ENCODE measurements at regions of chr7 and their contacts with region 1.

Region 1: GRCh38 chr7:94289071-94289470 is 105.6 kb upstream of the COL1A2 start:
- DNase-seq: peak; percentile 48 to 57
- H3K4me3 ChIP-seq: no peak overlapping the region
- H3K27ac ChIP-seq: no peak overlapping the region
- H3K4me1 ChIP-seq: no peaks in the 10 kb centered on the region
- H3K27me3 ChIP-seq: no peaks in the 10 kb centered on the region
- CTCF ChIP-seq: peak; percentile 82

Region 2: GRCh38 chr7:93622036-93623033 is 666.7 kb before region 1 on chr7:
- CTCF ChIA-PET with region 1: no interaction called
- POLR2A ChIA-PET with region 1: no interaction called
- intact Hi-C with region 1: loop called (anchors 5 kb)
- DNase-seq: peak in 1 of 2 experiments; percentile 10
- H3K4me3 ChIP-seq: peak overlapping the region; percentile 19; the same call in 1 of the 2 replicates
- H3K27ac ChIP-seq: no peak overlapping the region
- H3K4me1 ChIP-seq: no peaks in the 10 kb centered on the region
- H3K27me3 ChIP-seq: no peaks in the 10 kb centered on the region
- CTCF ChIP-seq: peak; percentile 62; the same call in 1 of the 2 replicates

Region 3: GRCh38 chr7:94395141-94396036 is 106.3 kb after region 1 on chr7:
- CTCF ChIA-PET with region 1: interaction called, 15 read pairs
- POLR2A ChIA-PET with region 1: no interaction called
- intact Hi-C with region 1: loop called (anchors 1 kb)
- DNase-seq: no peak
- H3K4me3 ChIP-seq: no peak overlapping the region
- H3K27ac ChIP-seq: no peak overlapping the region
- H3K4me1 ChIP-seq: 0 out of 2 replicates have a peak, but pooled peaks cover under 1% of the 10 kb centered on the region
- H3K27me3 ChIP-seq: no peaks in the 10 kb centered on the region
- CTCF ChIP-seq: peak; percentile 66

Region 4: GRCh38 chr7:94436018-94436604 is 147.0 kb after region 1 on chr7:
- CTCF ChIA-PET with region 1: interaction called, 10 read pairs
- POLR2A ChIA-PET with region 1: no interaction called
- intact Hi-C with region 1: loop called (anchors 1 kb)
- DNase-seq: peak; percentile 37 to 48
- H3K4me3 ChIP-seq: no peak overlapping the region
- H3K27ac ChIP-seq: no peak overlapping the region
- H3K4me1 ChIP-seq: no peaks in the 10 kb centered on the region
- H3K27me3 ChIP-seq: no peaks in the 10 kb centered on the region
- CTCF ChIP-seq: peak; percentile 88

Region 5: DNA sequence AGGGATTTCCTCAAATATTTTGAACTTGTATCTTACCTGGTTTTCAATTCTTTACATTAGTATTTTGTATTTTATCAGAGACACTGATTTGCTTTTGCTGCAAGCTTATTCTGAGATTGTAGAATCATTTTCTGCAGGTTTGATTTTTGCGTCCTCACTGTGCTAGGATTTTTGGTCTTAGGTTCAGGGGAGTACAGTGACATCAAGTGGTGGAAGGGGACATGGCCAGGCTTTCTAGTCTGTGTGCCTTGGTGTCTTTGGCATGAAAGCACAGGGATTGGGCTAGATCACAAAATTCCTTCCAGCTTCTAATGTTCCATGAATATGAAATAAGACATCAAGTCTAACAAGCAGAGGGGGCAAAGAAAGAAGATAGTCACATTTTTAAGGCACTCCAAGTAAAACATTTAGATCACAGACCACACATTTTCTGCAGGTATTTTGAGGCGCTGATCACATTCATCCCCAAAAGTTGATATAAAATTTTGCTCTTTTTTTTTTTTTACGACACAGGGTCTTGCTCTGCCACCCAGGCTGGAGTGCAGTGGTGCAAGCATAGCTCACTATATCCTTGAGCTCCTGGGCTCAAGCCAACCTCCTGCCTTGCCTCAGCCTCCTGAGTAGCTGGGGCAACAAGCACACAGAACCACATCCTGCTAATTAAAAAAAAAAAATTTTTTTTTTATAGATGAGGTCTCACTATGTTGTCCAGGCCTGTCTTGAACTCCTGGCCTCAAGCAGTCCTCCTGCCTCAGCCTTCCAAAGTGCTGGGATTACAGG is 910.9 kb after region 1 on chr7:
- CTCF ChIA-PET with region 1: no interaction called
- POLR2A ChIA-PET with region 1: no interaction called
- intact Hi-C with region 1: loop called (anchors 5 kb)
- DNase-seq: peak in 1 of 2 experiments; percentile 33
- H3K4me3 ChIP-seq: no peak overlapping the region
- H3K27ac ChIP-seq: no peak overlapping the region
- H3K4me1 ChIP-seq: no peaks in the 10 kb centered on the region
- H3K27me3 ChIP-seq: no peaks in the 10 kb centered on the region
- CTCF ChIP-seq: peak; percentile 74

Region 6: DNA sequence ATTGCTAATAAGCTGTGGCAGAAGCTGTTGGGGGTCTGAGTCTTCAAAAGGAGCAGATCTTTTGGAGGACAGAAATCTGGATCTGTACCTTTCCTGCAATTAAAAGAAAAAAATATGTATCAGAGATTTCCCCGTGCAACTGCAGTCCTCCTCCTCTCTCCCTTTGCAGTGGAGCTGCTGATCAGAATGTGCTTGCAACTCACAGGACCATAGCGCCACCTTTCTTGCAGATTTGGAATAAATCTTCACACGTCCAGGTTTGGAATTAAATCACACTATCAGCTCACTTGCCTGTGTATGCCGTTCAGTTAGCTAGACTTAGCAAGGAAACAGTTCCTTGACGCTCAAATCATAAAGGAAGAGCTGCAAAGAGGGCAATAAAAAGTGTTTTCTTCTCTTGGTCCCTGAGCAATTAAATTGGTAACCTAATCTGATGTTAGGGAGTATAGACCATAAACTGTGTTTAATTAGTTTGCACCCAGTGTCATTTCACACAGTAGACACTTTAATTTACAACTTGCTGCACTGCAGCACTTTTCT is 957.8 kb after region 1 on chr7:
- CTCF ChIA-PET with region 1: no interaction called
- POLR2A ChIA-PET with region 1: no interaction called
- intact Hi-C with region 1: loop called (anchors 1 kb)
- DNase-seq: peak; percentile 47 to 48
- H3K4me3 ChIP-seq: no peak overlapping the region
- H3K27ac ChIP-seq: no peak overlapping the region
- H3K4me1 ChIP-seq: no peaks in the 10 kb centered on the region
- H3K27me3 ChIP-seq: no peaks in the 10 kb centered on the region
- CTCF ChIP-seq: peak; percentile 83

Region 7: DNA sequence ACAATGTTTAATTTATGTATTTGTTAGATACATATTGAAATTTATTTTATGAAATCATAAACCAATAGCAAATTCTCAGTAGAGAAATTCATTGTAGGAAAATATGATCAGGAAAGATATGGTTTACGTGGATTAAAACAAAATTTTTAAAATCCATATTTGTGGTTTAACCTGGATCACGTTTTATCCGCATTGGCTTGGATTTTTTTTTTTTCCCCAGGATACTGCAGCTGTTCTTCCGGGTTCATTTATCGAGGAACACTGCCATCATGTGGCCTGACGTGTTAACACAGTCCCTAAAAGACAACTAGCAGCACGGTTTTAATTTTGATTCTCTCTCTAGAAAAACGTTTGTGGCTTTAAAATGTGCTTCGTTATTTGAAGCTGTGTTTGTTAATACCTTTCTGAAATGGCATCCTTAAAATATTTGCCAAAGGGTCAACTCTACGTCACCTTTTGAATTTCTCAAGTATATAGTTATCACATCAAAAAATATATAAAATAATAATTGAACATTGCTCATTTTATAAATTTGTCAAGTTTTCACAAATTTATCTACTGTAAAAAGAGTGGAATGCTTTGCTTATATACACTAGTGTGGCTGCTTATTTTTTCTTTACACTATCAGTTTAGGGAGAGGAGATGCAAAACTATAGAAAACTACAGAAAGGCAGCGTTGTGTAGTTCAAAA is 1188.0 kb after region 1 on chr7:
- CTCF ChIA-PET with region 1: no interaction called
- POLR2A ChIA-PET with region 1: no interaction called
- intact Hi-C with region 1: loop called (anchors 1 kb)
- DNase-seq: peak; percentile 46 to 54
- H3K4me3 ChIP-seq: peak overlapping the region; percentile 28; the same call in 1 of the 2 replicates
- H3K27ac ChIP-seq: no peak overlapping the region
- H3K4me1 ChIP-seq: no peaks in the 10 kb centered on the region
- H3K27me3 ChIP-seq: no peaks in the 10 kb centered on the region
- CTCF ChIP-seq: peak; percentile 87

Measured in PC-9 (cell line).